ENCODE measurements at regions of chr16 and their contacts with region 1.

Region 1: DNA sequence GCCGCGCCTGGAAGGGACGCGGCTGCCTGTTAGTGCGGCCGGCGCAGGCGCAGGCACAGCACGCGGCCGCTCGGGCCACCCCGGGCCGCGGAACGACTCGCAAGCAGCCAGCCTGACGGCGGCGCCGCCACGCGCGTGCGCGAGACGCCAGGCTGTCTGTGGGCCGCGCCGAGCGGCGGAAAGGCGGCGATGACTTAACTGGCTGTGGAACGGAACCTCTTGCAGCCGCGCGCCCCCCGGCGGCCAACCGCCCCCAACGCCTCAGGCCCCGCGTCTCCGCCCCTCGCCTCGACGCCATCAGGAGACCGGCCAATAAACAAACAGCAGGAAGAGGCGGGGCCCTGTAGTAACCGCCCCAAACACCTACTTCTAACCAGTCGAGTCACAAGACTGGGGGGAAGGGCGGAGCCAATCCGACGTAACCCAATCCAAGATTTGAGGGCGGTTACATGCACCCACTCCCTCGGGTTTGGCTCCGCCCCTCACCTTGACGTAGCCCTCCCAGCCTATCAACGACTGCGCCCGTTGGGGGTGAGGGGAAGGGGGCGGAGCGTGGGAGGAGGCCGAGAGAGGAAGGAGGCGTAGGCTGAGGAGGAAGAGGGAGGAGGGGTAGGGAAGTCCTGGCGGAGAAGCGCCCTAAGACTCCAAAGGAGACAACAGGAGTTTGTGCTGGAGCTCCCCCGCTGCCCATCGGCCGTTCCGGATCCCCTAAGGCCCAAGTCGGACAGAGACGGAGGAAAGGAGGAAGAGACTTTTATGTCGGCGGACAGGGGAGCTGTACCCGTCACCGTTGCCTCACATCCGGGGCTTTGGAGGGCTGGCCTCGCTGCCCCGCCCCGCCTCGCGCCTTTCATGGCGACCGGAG is at the start of gene FBRS:
- DNase-seq: peak; percentile 98 to 100 (median 100)
- ATAC-seq: peak; percentile 84
- H3K4me3 ChIP-seq: peak within 1 kb of the TSS; percentile 83
- H3K4me3 Mint-ChIP-seq: peak within 1 kb of the TSS; percentile 81 to 99 (median 96)
- H3K27ac ChIP-seq: peak within 1 kb of the TSS; percentile 94
- H3K27ac Mint-ChIP-seq: peak within 1 kb of the TSS; percentile 99 to 100 (median 100)
- H3K4me1 ChIP-seq: peaks cover 38 to 42% of the 10 kb centered on the region in 2 donors
- H3K4me1 Mint-ChIP-seq: peaks cover 19 to 50% (median 40%) of the 10 kb centered on the region in 7 donors
- H3K27me3 ChIP-seq: no peaks in the 10 kb centered on the region
- H3K27me3 Mint-ChIP-seq: no peaks in the 10 kb centered on the region
- total RNA-seq, gene FBRS: 143 to 174 (median 164) TPM

Region 2: DNA sequence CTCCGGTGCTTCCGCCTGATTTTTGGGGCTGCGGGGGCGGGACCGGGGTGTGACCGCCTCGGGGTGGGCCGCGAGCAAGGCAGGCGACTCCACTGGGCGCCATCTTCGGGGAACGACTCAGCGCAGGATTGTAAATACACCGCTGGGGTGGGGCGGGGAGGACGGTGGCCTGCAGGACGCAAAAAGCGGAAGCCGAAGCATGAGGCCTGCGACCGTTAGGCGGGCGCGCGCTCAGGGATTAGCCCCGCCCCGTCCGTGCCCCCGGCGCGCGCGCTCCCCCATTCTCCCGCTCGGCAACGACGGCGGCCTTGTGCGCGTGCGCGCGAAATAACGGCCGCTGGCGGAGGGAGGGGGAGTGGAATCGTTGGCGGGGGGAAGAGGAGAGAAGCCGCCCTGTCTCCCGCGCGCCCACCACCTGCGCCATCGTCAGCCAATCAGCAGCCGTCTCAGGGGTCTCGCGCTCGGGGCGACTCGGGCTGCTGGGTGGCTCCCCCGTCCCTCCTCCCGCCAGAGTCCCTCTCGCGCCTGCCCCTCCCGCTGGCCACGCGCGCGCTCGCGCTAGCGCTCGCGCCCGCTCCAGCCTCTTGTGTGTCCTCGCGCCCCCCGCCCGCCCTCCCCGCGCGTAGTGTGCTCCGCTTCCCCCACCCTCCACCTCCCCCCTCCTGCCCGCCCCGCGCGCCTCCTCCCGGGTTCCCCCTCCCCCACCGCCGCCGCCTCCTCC is 852.6 kb before region 1 on chr16:
- CTCF ChIA-PET with region 1: no interaction called
- POLR2A ChIA-PET with region 1: no interaction called
- intact Hi-C with region 1: loop called (anchors 2 to 5 kb)
- DNase-seq: peak; percentile 96 to 98 (median 98)
- ATAC-seq: peak; percentile 86
- H3K4me3 ChIP-seq: peak overlapping the region; percentile 87
- H3K4me3 Mint-ChIP-seq: peak overlapping the region; percentile 88 to 100 (median 98)
- H3K27ac ChIP-seq: peak overlapping the region; percentile 95
- H3K27ac Mint-ChIP-seq: peak overlapping the region; percentile 95 to 100 (median 99)
- H3K4me1 ChIP-seq: peaks cover 34 to 39% of the 10 kb centered on the region in 2 donors
- H3K4me1 Mint-ChIP-seq: peaks cover 28 to 49% (median 41%) of the 10 kb centered on the region in 7 donors
- H3K27me3 ChIP-seq: no peaks in the 10 kb centered on the region
- H3K27me3 Mint-ChIP-seq: peaks cover 0 to 2% (median 0%) of the 10 kb centered on the region in 5 donors

Region 3: DNA sequence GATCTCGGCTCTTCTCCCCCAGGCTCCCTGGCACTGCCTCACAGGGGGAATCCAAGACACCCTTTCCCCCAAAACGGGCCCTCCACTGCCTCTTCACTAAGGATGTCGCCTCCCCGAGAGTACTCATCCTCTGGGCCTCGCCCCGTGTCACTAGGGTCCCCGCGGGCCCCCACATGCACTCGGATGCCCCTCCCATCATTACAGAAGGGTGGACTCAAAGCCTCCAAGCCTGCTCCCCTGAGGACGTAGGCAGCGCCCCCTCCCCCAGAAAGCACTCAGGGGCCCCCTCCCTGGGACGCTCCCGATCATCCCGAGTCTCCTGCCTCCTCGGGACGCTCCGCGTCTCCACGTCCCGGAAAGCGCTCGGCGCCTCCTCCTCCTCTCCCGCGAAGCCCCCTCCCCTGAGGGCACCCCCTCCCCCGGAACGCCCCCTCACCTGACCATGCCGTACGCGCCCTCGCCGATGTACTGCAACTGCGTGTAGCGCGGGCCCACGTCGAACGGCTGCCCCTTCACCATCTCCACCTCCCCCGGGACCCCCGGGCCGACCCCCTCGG is 535.4 kb before region 1 on chr16:
- CTCF ChIA-PET with region 1: no interaction called
- POLR2A ChIA-PET with region 1: no interaction called
- intact Hi-C with region 1: loop called in 1 of 2 experiments (anchors 1 kb)
- DNase-seq: peak in 2 of 9 donors; percentile 19 to 35
- ATAC-seq: peak; percentile 2
- H3K4me3 ChIP-seq: peak overlapping the region; percentile 68
- H3K4me3 Mint-ChIP-seq: peak overlapping the region; percentile 82 to 94 (median 88)
- H3K27ac ChIP-seq: peak overlapping the region; percentile 89
- H3K27ac Mint-ChIP-seq: peak overlapping the region; percentile 75 to 93 (median 85)
- H3K4me1 ChIP-seq: peaks cover 6 to 13% of the 10 kb centered on the region in 2 donors
- H3K4me1 Mint-ChIP-seq: peaks cover 20 to 39% (median 27%) of the 10 kb centered on the region in 7 donors
- H3K27me3 ChIP-seq: no peaks in the 10 kb centered on the region
- H3K27me3 Mint-ChIP-seq: no peaks in the 10 kb centered on the region

Region 4: DNA sequence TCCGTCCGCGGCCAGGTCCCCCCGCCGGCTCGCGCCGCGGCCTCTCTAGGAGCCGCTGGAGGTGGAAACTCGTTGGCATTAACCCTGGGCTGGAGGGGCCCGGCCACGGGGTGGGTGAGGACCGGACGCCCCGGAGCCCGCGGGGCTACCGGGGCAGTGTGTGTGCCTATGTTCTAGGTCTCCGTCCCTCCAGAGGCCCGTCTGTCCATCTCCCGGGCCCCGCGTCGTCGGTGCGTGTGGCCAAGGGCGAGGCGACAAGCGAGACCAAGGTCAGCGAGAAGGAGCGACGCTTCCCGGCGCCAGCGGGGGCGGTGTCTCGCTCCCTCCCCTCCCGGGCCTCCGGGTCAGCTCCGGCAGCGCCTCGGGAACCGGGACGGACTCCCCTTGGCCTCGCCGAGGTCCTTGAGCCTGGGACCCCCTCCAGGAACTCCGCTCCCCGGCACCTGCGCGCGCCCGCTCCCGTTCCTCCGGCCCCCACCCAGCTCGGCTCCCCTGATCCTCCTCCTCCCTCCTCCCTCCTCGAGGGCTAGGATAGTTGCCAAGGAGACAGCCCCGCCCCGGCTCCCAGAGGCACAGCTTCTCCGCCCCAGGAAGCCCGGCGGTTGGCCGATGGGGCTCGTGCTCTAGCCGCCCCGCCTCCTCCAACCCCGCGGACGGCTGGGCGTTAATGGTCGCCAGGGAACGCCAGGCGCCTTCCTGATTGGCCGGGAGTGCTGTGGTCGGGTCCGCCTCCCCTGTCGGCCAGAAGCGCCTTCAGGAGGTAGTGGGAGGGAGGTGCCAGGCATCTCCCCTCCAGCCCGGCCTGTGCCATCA is 131.1 kb before region 1 on chr16:
- CTCF ChIA-PET with region 1: no interaction called
- POLR2A ChIA-PET with region 1: interaction called, 3 read pairs
- intact Hi-C with region 1: loop called in 1 of 2 experiments (anchors 1 kb)
- DNase-seq: peak; percentile 59 to 95 (median 64)
- ATAC-seq: peak; percentile 87
- H3K4me3 ChIP-seq: peak overlapping the region; percentile 75
- H3K4me3 Mint-ChIP-seq: peak overlapping the region; percentile 78 to 92 (median 88)
- H3K27ac ChIP-seq: peak overlapping the region; percentile 76
- H3K27ac Mint-ChIP-seq: peak overlapping the region; percentile 82 to 94 (median 88)
- H3K4me1 ChIP-seq: peaks cover 0 to 10% of the 10 kb centered on the region in 2 donors
- H3K4me1 Mint-ChIP-seq: peaks cover 16 to 39% (median 32%) of the 10 kb centered on the region in 7 donors
- H3K27me3 ChIP-seq: no peaks in the 10 kb centered on the region
- H3K27me3 Mint-ChIP-seq: no peaks in the 10 kb centered on the region

Region 5: DNA sequence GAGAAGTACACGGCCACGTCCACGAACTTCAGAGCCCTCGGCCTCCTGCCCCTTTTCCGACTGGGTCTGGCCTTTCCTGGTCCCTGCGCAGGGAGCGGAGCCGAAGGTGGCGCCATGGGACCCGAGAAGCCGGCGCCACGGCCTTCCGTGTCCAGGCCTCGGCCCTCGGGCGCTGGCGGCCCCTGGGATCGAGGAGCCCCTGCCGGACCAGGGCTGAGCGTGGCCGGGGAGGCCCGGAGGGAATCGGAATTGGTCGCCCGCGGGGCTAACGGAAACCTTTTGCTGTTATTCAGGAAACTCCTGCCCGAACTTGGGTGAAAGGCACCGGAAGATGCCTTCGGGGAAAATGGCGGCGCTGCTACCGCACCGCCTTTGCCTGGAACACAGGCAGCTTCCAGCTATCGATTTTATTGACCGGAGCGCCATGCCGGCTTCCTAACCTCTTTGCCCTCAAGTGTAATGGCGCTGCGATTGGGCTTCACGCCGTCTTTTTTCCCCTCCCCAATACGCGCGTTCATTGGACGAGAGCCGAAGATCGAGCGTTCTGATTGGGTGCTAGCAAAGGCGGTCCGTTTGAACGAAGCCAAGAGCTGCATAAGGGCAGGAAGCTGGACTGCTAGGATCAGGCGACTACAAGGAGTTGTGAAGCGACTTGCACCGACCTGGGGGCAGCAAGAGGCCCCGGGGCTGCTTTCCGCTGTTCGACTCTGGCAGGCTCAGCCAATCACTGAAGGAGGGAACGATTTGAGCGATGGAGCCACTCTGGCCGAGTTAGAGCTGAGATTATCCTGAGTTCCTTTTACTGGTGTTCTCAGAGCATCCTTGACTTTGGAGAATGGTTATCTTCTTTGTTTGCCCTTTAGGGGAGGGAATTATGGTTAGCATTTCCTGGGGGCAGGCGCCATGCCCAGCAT is 47.9 kb before region 1 on chr16 and contains the start of gene ZNF689:
- CTCF ChIA-PET with region 1: no interaction called
- POLR2A ChIA-PET with region 1: interaction called, 13 read pairs
- intact Hi-C with region 1: loop called (anchors 1 kb)
- DNase-seq: peak; percentile 90 to 98 (median 93)
- ATAC-seq: peak; percentile 96
- H3K4me3 ChIP-seq: peak within 1 kb of the TSS; percentile 98
- H3K4me3 Mint-ChIP-seq: peak within 1 kb of the TSS; percentile 89 to 97 (median 94)
- H3K27ac ChIP-seq: peak within 1 kb of the TSS; percentile 94
- H3K27ac Mint-ChIP-seq: peak within 1 kb of the TSS; percentile 94 to 99 (median 97)
- H3K4me1 ChIP-seq: peaks cover 8 to 11% of the 10 kb centered on the region in 2 donors
- H3K4me1 Mint-ChIP-seq: peaks cover 5 to 26% (median 22%) of the 10 kb centered on the region in 7 donors
- H3K27me3 ChIP-seq: no peaks in the 10 kb centered on the region
- H3K27me3 Mint-ChIP-seq: no peaks in the 10 kb centered on the region
- total RNA-seq, gene ZNF689: 6.8 to 14.6 (median 12.4) TPM

Region 6: GRCh38 chr16:30747799-30748634 is 89.9 kb after region 1 on chr16 and contains the start of gene PHKG2:
- CTCF ChIA-PET with region 1: no interaction called
- POLR2A ChIA-PET with region 1: interaction called, 8 read pairs
- intact Hi-C with region 1: loop called (anchors 1 kb)
- DNase-seq: peak; percentile 82 to 95 (median 92)
- ATAC-seq: peak; percentile 99
- H3K4me3 ChIP-seq: peak within 1 kb of the TSS; percentile 51
- H3K4me3 Mint-ChIP-seq: peak within 1 kb of the TSS; percentile 78 to 98 (median 90)
- H3K27ac ChIP-seq: peak within 1 kb of the TSS; percentile 75
- H3K27ac Mint-ChIP-seq: peak within 1 kb of the TSS; percentile 82 to 95 (median 90)
- H3K4me1 ChIP-seq: peaks cover 4 to 6% of the 10 kb centered on the region in 2 donors
- H3K4me1 Mint-ChIP-seq: peaks cover 18 to 29% (median 27%) of the 10 kb centered on the region in 7 donors
- H3K27me3 ChIP-seq: no peaks in the 10 kb centered on the region
- H3K27me3 Mint-ChIP-seq: no peaks in the 10 kb centered on the region
- total RNA-seq, gene PHKG2: 33.2 to 57.8 (median 46.7) TPM

Region 7: DNA sequence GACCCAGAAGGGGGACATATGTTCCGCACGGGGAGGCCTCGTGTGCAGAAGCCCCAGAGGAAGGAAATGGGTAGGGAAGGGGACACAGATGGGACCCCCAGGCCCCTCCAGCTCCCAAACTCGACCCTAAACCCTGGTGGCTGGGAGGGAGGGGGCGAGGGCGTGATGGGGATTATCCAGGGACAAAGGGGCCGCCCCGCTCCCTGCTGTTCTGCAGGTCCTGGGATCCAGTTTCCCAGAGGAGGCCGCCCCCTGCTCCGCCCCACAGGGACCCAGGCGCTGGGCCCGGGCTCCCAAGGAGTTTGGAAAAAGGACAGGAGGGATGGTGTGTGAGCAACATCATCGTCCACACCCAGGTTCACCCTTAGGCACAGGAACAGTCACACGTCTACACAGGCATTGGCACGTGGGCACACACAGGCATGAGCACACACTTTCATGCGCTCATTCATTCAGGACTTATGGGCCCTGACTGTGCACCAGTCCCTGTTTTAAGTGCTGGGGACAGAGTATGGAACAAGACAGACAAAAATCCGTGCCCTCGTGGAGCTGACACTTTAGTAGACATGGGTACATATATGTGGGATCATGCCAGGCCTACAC is 252.4 kb after region 1 on chr16:
- CTCF ChIA-PET with region 1: no interaction called
- POLR2A ChIA-PET with region 1: no interaction called
- intact Hi-C with region 1: no loop called
- DNase-seq: no peak
- ATAC-seq: no peak
- H3K4me3 ChIP-seq: no peak overlapping the region
- H3K4me3 Mint-ChIP-seq: no peak overlapping the region
- H3K27ac ChIP-seq: no peak overlapping the region
- H3K27ac Mint-ChIP-seq: no peak overlapping the region
- H3K4me1 ChIP-seq: peaks cover 0 to 7% of the 10 kb centered on the region in 2 donors
- H3K4me1 Mint-ChIP-seq: peaks cover 7 to 15% (median 9%) of the 10 kb centered on the region in 7 donors
- H3K27me3 ChIP-seq: no peaks in the 10 kb centered on the region
- H3K27me3 Mint-ChIP-seq: no peaks in the 10 kb centered on the region

Region 8: DNA sequence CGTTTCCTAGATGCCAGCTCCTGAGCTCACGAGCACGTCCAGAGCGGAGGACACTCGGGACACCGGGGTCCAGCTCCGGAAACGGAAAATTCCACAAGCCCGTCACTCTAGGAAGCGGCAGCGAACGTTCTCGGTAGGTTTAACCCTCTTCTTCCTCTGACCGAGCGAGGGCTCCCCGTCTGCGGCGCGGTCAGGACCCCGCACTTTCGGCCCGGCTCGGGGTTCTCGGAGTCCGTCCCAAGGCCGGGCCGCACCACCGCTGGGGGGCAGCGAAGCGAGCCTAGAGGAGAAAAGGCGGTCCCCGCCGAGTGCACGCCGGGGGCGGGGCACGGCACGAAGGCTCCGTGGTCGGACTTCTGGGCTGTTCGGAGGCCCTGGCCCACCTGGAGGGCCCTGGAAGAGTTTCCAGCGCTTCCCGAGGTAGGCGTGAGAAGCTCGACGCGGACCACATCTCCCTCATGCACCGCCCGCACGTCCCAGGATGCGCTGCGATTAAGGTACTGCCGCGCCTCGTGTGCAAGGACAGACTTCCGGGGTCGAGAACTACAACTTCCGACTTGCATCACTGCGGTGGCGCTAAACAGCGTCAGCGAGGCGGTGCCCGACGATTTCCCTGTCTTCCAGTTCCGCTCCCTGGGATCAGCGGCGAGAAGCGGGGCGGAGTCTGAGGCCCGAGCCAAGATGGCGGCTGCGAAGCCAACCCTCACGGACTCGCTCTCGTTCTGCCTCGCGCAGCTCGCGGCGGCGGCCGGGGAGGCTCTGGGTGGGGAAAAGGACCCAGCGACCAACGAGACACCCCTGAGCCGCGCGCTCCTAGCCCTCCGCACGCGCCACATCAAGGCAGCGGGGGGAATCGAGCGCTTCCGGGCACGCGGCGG is 801.0 kb after region 1 on chr16 and contains the start of gene ARMC5:
- CTCF ChIA-PET with region 1: no interaction called
- POLR2A ChIA-PET with region 1: no interaction called
- intact Hi-C with region 1: loop called in 1 of 2 experiments (anchors 2 kb)
- DNase-seq: peak in 7 of 9 donors; percentile 92 to 99 (median 98)
- ATAC-seq: peak; percentile 81
- H3K4me3 ChIP-seq: peak within 1 kb of the TSS; percentile 87
- H3K4me3 Mint-ChIP-seq: peak within 1 kb of the TSS; percentile 88 to 96 (median 94)
- H3K27ac ChIP-seq: peak within 1 kb of the TSS; percentile 95
- H3K27ac Mint-ChIP-seq: peak within 1 kb of the TSS; percentile 94 to 99 (median 98)
- H3K4me1 ChIP-seq: peaks cover 32 to 37% of the 10 kb centered on the region in 2 donors
- H3K4me1 Mint-ChIP-seq: peaks cover 26 to 51% (median 46%) of the 10 kb centered on the region in 7 donors
- H3K27me3 ChIP-seq: no peaks in the 10 kb centered on the region
- H3K27me3 Mint-ChIP-seq: no peaks in the 10 kb centered on the region
- total RNA-seq, gene ARMC5: 8.5 to 14.4 (median 11.5) TPM

Measured in naive thymus-derived CD4-positive, alpha-beta T cell (primary cell).